Left cardiac atrium (tissue), 4 donors: ENCODE measurements at regions of chr17 and their contacts with region 1.

Region 1: GRCh38 chr17:75978938-75979704 is at the starts of genes ACOX1 and TEN1:
- DNase-seq: peak; percentile 99
- ATAC-seq: peak; percentile 97 to 98
- total RNA-seq, gene ACOX1: 57.8 to 62.0 TPM
- total RNA-seq, gene TEN1: 10.2 to 12.2 TPM

Region 2: DNA sequence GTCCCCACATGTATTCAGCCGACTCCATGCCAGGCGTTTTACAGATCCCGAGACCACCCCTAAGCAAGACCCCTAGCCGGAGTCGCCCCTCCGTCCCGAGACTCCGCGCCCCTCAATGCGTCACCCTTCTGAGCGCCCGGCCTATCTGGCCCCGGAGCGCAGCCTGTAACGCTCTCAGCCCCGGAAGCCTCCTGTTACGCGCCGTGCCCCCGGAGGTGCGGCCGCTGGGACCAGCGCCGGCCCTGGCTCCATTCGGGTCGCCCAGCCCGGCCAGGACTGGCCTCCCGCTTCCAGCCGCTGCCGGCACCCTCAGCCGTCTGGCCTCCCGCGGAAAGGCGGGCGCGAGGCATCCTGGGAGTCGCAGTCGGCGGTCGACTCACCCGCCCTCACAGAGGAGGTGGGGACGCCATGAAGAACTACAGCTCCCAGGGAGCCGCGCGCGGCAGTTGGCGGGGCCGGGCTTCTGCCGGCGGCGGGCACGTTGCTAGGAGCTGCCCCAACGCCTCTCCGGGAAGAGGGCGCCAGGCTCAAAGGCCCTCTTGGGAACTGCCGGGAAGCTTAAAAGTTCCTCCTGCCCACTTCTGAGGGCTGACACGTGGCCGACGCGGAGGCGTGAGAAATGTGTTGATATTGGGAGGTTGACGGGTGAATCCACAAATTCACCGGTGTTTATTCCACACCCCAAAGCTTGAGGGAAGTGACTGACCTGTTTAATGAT is 38.2 kb before region 1 on chr17 and contains the start of gene FBF1:
- intact Hi-C with region 1: loop called in 1 of 2 experiments (anchors 5 kb)
- DNase-seq: peak; percentile 96
- ATAC-seq: peak; percentile 99
- total RNA-seq, gene FBF1: 3.0 to 4.7 TPM